MCF 10A (cell line): ENCODE measurements at regions of chr10 and their contacts with region 1.

Region 1: GRCh38 chr10:49407552-49408137 is 11.8 kb upstream of the DRGX start:
- DNase-seq: peak; percentile 78
- H3K4me3 Mint-ChIP-seq: no peak overlapping the region
- H3K27ac Mint-ChIP-seq: no peak overlapping the region
- H3K4me1 Mint-ChIP-seq: no peaks in the 10 kb centered on the region
- H3K27me3 Mint-ChIP-seq: peaks cover 61% of the 10 kb centered on the region
- CTCF ChIP-seq: peak; percentile 85

Region 2: DNA sequence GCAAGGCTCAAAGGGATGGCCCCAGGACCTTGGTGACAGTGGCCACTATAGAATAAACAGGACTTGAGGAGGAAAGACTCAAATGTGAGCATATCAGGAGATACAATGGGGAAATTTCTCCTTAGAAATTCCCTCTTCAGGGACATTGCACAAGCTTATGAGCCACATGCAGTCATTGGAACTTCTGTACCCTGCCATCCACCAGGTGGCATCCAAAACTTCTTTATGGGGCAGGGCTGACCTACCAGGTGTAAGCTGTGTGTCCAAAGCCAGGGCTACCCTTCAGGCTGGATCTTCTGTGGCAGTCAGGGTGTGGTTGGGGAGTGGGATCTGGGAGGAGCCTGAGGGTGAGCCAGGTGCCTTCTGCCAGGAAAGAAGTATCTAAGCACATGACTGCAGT is 431.4 kb before region 1 on chr10:
- CTCF ChIA-PET with region 1: interaction called, 5 read pairs
- POLR2A ChIA-PET with region 1: no interaction called
- intact Hi-C with region 1: loop called (anchors 10 kb)
- DNase-seq: peak; percentile 58
- H3K4me3 Mint-ChIP-seq: no peak overlapping the region
- H3K27ac Mint-ChIP-seq: no peak overlapping the region
- H3K4me1 Mint-ChIP-seq: no peaks in the 10 kb centered on the region
- H3K27me3 Mint-ChIP-seq: peaks cover 17% of the 10 kb centered on the region
- CTCF ChIP-seq: no peak

Region 3: DNA sequence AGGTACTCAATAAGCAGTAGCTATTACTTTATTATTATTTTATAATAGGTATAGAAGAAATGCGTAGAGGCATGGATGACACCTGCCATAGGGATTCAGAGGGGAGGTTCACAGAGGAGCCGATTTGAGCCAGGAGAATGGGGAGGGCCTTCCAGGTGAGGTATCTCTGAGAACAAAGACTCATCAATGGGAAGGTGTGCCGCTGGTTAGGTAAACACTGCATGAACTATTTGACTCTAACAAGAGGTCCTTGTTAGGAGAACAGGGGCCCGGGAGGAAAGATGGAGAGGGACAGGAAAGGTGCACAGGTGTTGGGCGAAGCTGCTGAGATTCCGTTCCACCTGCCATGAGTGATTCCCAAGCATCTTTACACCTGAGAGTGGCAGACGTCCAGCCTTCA is 177.6 kb before region 1 on chr10:
- CTCF ChIA-PET with region 1: no interaction called
- POLR2A ChIA-PET with region 1: no interaction called
- intact Hi-C with region 1: no loop called
- DNase-seq: no peak
- H3K4me3 Mint-ChIP-seq: no peak overlapping the region
- H3K27ac Mint-ChIP-seq: no peak overlapping the region
- H3K4me1 Mint-ChIP-seq: no peaks in the 10 kb centered on the region
- H3K27me3 Mint-ChIP-seq: peaks cover 68% of the 10 kb centered on the region
- CTCF ChIP-seq: no peak

Region 4: DNA sequence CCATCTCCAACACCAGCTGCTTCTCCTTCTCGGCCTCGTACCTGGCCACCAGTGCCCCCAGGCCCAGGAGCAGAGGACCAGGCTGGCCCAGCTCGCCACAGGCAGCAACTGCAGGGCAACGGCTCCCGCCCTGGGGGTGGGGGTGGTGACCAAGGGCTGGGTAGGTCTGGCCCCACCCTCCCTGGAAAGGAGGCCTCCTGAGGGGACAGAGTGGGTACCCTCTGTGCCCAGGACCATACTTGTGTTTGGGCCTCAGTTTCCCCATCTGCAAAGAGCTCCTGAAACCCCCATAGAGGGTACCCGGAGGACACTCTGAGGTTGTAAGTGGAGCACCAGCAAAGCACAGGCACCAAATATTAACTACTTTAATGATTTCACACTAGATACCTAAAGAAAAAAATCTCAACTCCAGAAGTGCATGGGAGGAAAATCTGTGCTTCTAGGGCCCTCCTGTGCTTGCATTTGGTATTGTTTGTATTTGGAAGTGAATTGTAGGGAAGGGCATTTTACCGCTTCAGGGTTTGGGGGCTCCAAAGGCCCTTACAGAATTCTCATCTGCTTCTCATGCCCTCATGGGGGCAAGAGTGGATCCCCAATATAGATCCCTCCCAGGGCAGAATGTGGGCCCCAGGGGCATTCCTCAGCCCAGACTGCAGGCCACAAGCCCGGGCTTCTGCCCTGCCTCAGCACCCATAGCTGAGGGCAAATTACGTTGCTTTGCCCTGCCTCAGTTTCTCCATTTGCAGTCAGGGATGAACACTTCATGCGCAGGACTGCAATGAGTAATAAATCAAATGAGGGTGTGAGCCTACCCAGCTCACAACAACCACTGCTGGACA is 10.7 kb after region 1 on chr10:
- CTCF ChIA-PET with region 1: interaction called, 24 read pairs
- POLR2A ChIA-PET with region 1: no interaction called
- intact Hi-C with region 1: no loop called
- DNase-seq: no peak
- H3K4me3 Mint-ChIP-seq: no peak overlapping the region
- H3K27ac Mint-ChIP-seq: no peak overlapping the region
- H3K4me1 Mint-ChIP-seq: no peaks in the 10 kb centered on the region
- H3K27me3 Mint-ChIP-seq: peaks cover 36% of the 10 kb centered on the region
- CTCF ChIP-seq: no peak

Region 5: GRCh38 chr10:49512121-49512809 is 104.6 kb after region 1 on chr10:
- CTCF ChIA-PET with region 1: interaction called, 10 read pairs
- POLR2A ChIA-PET with region 1: no interaction called
- intact Hi-C with region 1: no loop called
- DNase-seq: peak; percentile 43
- H3K4me3 Mint-ChIP-seq: no peak overlapping the region
- H3K27ac Mint-ChIP-seq: peak overlapping the region; percentile 49
- H3K4me1 Mint-ChIP-seq: peaks cover 6% of the 10 kb centered on the region
- H3K27me3 Mint-ChIP-seq: no peaks in the 10 kb centered on the region
- CTCF ChIP-seq: peak; percentile 60

Region 6: DNA sequence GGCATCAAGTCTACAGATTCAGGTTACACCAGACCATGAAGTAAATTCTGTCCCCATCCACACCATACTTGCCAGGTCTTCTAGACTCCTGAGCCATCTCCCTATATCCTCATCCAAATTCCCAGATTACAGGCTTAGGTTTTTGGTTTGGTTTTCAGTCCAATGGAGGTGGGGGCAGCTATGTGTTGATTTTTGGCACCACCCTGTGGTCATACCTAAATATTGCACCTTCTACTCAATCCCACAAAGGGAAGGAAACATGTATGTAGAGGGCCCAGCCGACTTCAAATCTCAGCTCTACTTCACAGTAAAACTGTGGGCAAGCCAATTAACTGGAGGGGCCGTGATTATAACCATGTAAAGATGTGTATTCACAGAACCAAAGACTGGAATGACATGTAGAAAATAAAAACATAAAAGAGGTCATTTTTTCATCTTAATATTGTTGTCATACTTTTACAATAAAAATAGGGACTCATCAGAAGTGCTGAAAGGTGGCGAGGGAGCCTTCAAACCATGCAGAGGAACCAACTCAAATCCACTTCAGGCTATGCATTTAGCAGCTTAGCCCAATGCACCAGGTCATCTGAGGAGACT is 111.4 kb after region 1 on chr10:
- CTCF ChIA-PET with region 1: interaction called, 25 read pairs
- POLR2A ChIA-PET with region 1: no interaction called
- intact Hi-C with region 1: no loop called
- DNase-seq: peak; percentile 60
- H3K4me3 Mint-ChIP-seq: no peak overlapping the region
- H3K27ac Mint-ChIP-seq: no peak overlapping the region
- H3K4me1 Mint-ChIP-seq: peaks cover 5% of the 10 kb centered on the region
- H3K27me3 Mint-ChIP-seq: no peaks in the 10 kb centered on the region
- CTCF ChIP-seq: peak; percentile 66

Region 7: GRCh38 chr10:49526619-49527018 is 119.0 kb after region 1 on chr10:
- CTCF ChIA-PET with region 1: interaction called, 11 read pairs
- POLR2A ChIA-PET with region 1: no interaction called
- intact Hi-C with region 1: no loop called
- DNase-seq: no peak
- H3K4me3 Mint-ChIP-seq: no peak overlapping the region
- H3K27ac Mint-ChIP-seq: peak overlapping the region; percentile 33
- H3K4me1 Mint-ChIP-seq: peaks cover 22% of the 10 kb centered on the region
- H3K27me3 Mint-ChIP-seq: no peaks in the 10 kb centered on the region
- CTCF ChIP-seq: no peak

Region 8: GRCh38 chr10:49568235-49568634 is 160.6 kb after region 1 on chr10:
- CTCF ChIA-PET with region 1: no interaction called
- POLR2A ChIA-PET with region 1: no interaction called
- intact Hi-C with region 1: no loop called
- DNase-seq: peak; percentile 29
- H3K4me3 Mint-ChIP-seq: peak overlapping the region; percentile 65
- H3K27ac Mint-ChIP-seq: peak overlapping the region; percentile 88
- H3K4me1 Mint-ChIP-seq: peaks cover 56% of the 10 kb centered on the region
- H3K27me3 Mint-ChIP-seq: no peaks in the 10 kb centered on the region
- CTCF ChIP-seq: no peak

Region 9: DNA sequence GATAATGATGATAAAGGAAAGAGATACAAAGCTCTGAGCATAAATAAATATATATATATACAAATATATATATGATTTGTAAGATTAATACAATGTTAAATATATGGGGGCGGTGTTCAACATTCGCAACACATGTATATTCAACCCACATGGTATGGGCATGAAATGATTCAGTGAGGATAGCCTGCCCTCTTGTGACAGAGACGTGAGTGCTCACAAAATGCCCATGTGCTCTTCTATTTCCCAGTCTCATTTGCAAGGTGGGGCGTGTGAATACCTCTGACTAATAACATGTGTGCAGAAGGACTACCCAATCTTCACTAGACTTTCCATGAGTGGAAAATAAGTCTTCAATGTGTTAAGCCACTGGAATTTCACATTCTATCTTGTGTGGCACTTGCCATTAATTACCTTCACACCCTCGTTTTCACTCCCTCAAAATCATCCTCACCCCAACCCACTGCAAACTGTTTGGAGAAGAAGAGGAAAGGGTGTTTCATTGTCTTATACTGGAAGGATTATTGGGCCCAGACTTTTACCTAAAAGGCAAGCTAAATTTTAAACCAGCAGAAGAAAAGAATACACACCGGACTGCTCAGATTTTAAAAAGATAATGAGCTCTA is 816.8 kb after region 1 on chr10:
- CTCF ChIA-PET with region 1: interaction called, 5 read pairs
- POLR2A ChIA-PET with region 1: no interaction called
- intact Hi-C with region 1: loop called (anchors 5 kb)
- DNase-seq: peak; percentile 84
- H3K4me3 Mint-ChIP-seq: no peak overlapping the region
- H3K27ac Mint-ChIP-seq: no peak overlapping the region
- H3K4me1 Mint-ChIP-seq: no peaks in the 10 kb centered on the region
- H3K27me3 Mint-ChIP-seq: peaks cover 46% of the 10 kb centered on the region
- CTCF ChIP-seq: peak; percentile 65